Naive thymus-derived CD4-positive, alpha-beta T cell (primary cell): ENCODE measurements at regions of chr3 and their contacts with region 1.

Region 1: DNA sequence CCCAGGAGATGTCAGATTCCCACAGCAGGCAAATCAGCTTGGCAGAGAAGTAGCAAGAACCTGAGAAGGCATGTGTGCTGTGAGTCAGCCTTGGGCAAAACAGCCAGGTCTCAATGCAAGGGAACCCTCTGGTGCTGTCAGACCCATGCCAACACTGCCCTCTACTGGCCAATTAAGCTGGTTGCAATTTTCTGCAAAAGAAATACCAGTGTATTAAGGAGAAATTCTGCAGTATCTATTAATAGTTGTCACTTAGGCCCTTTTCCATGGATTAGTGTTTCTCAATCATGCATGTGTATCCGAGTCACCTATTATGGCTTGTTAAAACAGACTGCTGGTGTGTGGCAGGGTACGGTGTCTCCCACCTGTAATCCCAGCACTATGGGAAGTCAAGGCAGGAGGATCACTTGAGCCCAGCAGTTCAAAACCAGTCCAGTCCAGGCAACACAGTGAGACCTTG is 26.2 kb downstream of the MAP4 start:
- DNase-seq: peak; percentile 25 to 77 (median 66)
- ATAC-seq: peak; percentile 99
- H3K4me3 ChIP-seq: no peak overlapping the region
- H3K4me3 Mint-ChIP-seq: no peak overlapping the region
- H3K27ac ChIP-seq: no peak overlapping the region
- H3K27ac Mint-ChIP-seq: peak overlapping the region in 1 of 9 donors; percentile 43
- H3K4me1 ChIP-seq: no peaks in the 10 kb centered on the region
- H3K4me1 Mint-ChIP-seq: peaks cover 4 to 7% (median 6%) of the 10 kb centered on the region in 7 donors
- H3K27me3 ChIP-seq: no peaks in the 10 kb centered on the region
- H3K27me3 Mint-ChIP-seq: no peaks in the 10 kb centered on the region

Region 2: DNA sequence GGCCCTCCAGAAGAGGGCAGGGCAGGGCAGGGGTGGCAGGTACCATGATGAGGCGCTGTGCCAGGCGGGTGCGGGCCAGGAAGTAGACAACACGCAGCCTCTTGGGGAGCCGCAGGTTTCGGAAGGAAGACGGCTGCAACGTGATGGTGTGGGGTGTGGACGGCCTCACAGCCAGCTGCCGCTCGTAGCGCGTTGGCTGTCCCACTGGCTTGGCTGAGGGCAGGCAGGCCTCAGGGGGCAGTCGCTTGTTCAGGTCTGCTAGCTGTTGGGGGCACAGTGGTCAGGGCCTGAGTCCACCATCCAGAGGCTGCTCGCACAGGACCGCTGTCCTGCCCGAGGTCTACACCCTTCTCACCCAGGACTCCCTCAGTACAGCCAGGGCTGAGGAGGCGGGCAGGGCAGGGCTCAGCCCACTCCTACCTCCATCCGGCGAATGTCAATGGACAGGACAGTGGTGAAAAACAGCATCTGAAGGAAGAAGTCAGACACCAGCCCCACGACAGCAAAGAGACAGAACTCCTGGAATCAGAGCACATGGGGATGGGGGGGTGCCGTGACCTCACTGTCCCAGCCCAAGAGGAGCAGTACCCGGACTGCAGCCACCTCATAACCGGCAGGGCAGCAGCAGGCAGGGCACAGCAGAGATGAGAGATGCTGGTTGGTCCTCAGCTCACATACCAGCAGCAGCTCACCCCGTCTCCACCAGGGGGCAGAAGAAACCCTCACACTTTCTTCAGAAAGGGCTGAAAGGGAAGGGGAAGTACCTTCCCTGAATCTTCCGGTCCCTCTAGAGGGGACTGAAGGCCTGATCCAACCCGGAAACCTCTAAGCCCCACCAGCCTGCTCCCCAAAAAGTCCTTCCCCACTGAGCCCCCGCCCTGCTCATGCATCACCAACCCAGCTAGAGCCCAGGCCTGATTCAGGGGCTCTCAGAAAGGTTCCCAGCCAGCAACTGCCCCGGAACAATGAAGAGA is 569.2 kb before region 1 on chr3:
- CTCF ChIA-PET with region 1: no interaction called
- POLR2A ChIA-PET with region 1: no interaction called
- intact Hi-C with region 1: loop called in 1 of 2 experiments (anchors 1 kb)
- DNase-seq: peak; percentile 66 to 90 (median 88)
- ATAC-seq: peak; percentile 98
- H3K4me3 ChIP-seq: peak overlapping the region; percentile 29
- H3K4me3 Mint-ChIP-seq: peak overlapping the region; percentile 56 to 86 (median 78)
- H3K27ac ChIP-seq: peak overlapping the region; percentile 79
- H3K27ac Mint-ChIP-seq: peak overlapping the region; percentile 90 to 100 (median 99)
- H3K4me1 ChIP-seq: peaks cover 8 to 15% of the 10 kb centered on the region in 2 donors
- H3K4me1 Mint-ChIP-seq: peaks cover 0 to 22% (median 10%) of the 10 kb centered on the region in 7 donors
- H3K27me3 ChIP-seq: no peaks in the 10 kb centered on the region
- H3K27me3 Mint-ChIP-seq: no peaks in the 10 kb centered on the region

Region 3: GRCh38 chr3:47522082-47522987 is 467.7 kb before region 1 on chr3:
- CTCF ChIA-PET with region 1: interaction called, 7 read pairs
- POLR2A ChIA-PET with region 1: no interaction called
- intact Hi-C with region 1: loop called (anchors 1 to 2 kb)
- DNase-seq: peak; percentile 36 to 75 (median 60)
- ATAC-seq: peak; percentile 97
- H3K4me3 ChIP-seq: no peak overlapping the region
- H3K4me3 Mint-ChIP-seq: no peak overlapping the region
- H3K27ac ChIP-seq: no peak overlapping the region
- H3K27ac Mint-ChIP-seq: peak overlapping the region in 2 of 9 donors; percentile 15 to 67
- H3K4me1 ChIP-seq: no peaks in the 10 kb centered on the region
- H3K4me1 Mint-ChIP-seq: peaks cover 0 to 11% (median 0%) of the 10 kb centered on the region in 7 donors
- H3K27me3 ChIP-seq: no peaks in the 10 kb centered on the region
- H3K27me3 Mint-ChIP-seq: peaks cover 0 to 8% (median 0%) of the 10 kb centered on the region in 5 donors

Region 4: DNA sequence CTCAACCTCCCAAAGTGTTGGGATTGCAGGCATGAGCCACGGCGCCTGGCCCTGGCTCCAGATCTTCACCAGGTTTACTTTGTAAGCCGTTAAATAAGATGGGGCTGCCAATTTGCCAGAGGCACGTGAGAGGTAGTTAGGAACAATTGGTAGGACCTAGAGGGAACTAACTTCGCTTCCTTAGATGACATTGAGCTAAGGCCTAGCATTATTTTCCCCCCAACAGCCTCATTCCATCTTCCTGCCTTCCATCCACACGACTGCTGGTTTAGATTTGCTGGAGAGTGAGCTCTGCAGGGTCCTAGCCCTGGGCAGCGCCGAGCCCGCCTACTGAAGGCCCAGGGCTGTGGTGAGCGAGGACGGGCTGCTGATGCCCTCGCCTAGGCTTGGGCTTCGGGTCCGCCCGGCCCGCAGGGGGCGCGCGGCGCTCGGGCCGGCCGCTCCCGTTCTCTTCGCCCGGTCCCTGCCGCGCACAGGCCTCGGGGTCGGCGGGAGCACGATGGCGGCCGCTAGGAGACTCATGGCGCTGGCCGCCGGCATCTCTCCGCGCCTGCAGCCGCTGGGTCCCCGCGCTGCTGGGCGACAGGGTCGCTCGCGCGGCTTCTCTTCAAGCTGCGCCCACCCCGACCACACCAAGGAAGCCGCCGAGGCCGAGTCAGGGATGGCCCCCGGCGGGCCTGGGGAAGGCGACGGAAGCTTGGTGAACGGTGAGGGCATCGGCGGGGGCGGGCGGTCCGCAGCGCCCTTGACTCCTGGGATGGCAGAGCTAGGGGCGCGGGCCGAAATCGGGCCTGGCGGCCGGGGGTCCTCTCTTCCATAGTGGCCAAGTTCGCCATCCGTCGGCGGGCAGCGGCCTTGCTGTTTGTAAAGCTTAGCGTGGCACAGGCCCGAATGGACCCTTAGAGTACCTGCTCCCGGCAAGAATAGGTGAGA is 165.2 kb before region 1 on chr3:
- CTCF ChIA-PET with region 1: interaction called, 22 read pairs
- POLR2A ChIA-PET with region 1: interaction called, 5 read pairs
- intact Hi-C with region 1: loop called (anchors 1 kb)
- DNase-seq: peak; percentile 62 to 86 (median 79)
- ATAC-seq: peak; percentile 100
- H3K4me3 ChIP-seq: peak overlapping the region; percentile 79
- H3K4me3 Mint-ChIP-seq: peak overlapping the region; percentile 81 to 94 (median 90)
- H3K27ac ChIP-seq: peak overlapping the region; percentile 88
- H3K27ac Mint-ChIP-seq: peak overlapping the region; percentile 66 to 96 (median 89)
- H3K4me1 ChIP-seq: peaks cover 15% of the 10 kb centered on the region in 2 donors
- H3K4me1 Mint-ChIP-seq: peaks cover 15 to 46% (median 36%) of the 10 kb centered on the region in 7 donors
- H3K27me3 ChIP-seq: no peaks in the 10 kb centered on the region
- H3K27me3 Mint-ChIP-seq: no peaks in the 10 kb centered on the region

Region 5: GRCh38 chr3:47836986-47837385 is 153.0 kb before region 1 on chr3:
- CTCF ChIA-PET with region 1: interaction called, 20 read pairs
- POLR2A ChIA-PET with region 1: no interaction called
- intact Hi-C with region 1: loop called (anchors 1 kb)
- DNase-seq: no peak
- ATAC-seq: no peak
- H3K4me3 ChIP-seq: no peak overlapping the region
- H3K4me3 Mint-ChIP-seq: no peak overlapping the region
- H3K27ac ChIP-seq: no peak overlapping the region
- H3K27ac Mint-ChIP-seq: peak overlapping the region in 6 of 9 donors; percentile 35 to 56 (median 50)
- H3K4me1 ChIP-seq: no peaks in the 10 kb centered on the region
- H3K4me1 Mint-ChIP-seq: peaks cover 0 to 12% (median 7%) of the 10 kb centered on the region in 7 donors
- H3K27me3 ChIP-seq: no peaks in the 10 kb centered on the region
- H3K27me3 Mint-ChIP-seq: no peaks in the 10 kb centered on the region

Region 6: GRCh38 chr3:48151058-48151806 is 161.2 kb after region 1 on chr3:
- CTCF ChIA-PET with region 1: no interaction called
- POLR2A ChIA-PET with region 1: no interaction called
- intact Hi-C with region 1: loop called (anchors 1 kb)
- DNase-seq: peak in 7 of 9 donors; percentile 17 to 61 (median 28)
- ATAC-seq: peak; percentile 80
- H3K4me3 ChIP-seq: no peak overlapping the region
- H3K4me3 Mint-ChIP-seq: no peak overlapping the region
- H3K27ac ChIP-seq: no peak overlapping the region
- H3K27ac Mint-ChIP-seq: no peak overlapping the region
- H3K4me1 ChIP-seq: no peaks in the 10 kb centered on the region
- H3K4me1 Mint-ChIP-seq: peaks cover 0 to 4% (median 0%) of the 10 kb centered on the region in 7 donors
- H3K27me3 ChIP-seq: no peaks in the 10 kb centered on the region
- H3K27me3 Mint-ChIP-seq: no peaks in the 10 kb centered on the region